AG04449 (cell line): ENCODE measurements at regions of chr19 and their contacts with region 1.

Region 1: DNA sequence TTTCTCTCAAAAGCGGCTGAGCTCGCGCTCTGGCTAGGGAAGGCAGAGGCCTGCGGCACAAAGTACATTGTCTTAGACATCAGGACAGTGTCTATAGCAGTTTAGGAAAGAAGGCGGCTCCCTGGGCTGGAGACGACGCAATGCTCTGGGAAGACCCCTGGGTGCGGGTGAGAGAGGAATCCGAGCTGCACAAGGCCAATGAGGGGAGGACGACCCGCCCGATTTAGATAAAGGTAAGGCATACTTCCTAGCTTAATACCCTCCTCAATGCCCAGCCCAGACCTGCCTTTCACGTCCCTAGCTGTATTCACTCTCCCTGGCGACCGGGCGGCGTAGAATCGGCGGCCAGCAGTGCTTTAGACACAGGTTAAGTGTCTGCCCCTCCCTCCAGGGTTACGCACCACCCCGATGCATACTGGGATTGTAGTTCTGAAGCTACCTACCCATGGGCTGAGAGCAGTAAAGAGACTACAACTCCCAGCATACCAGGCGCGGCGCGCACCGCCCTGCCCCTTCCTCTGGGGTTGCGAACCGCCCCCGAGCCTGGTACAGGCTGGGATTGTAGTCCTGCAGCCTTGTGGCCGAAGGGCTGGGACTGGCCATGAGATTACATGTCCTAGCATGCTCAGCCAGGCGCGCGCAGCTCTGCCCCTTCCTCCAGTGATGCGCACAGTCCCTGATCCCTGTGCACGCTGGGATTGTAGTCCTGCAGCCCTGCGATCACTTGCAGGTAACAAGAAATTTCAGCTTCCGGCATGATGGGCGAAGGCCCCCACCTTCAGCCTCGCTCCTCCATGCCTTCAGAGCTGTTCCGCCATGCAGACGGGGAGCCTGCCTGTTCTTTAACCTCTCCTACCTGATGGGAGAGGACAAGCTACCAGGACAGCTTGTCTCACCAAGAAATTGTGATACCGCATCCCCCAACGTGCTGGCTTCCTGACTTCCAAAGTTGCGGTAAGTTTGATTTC is 43.4 kb upstream of the ZNF14 start:
- DNase-seq: peak; percentile 91
- H3K4me3 ChIP-seq: peak overlapping the region; percentile 95
- CTCF ChIP-seq: peak; percentile 3

Region 2: GRCh38 chr19:19821366-19821951 is 45.1 kb after region 1 on chr19 and contains the start of gene ZNF506:
- CTCF ChIA-PET with region 1: no interaction called
- POLR2A ChIA-PET with region 1: interaction called, 11 read pairs
- DNase-seq: peak; percentile 67
- H3K4me3 ChIP-seq: peak within 1 kb of the TSS; percentile 86
- CTCF ChIP-seq: no peak

Region 3: DNA sequence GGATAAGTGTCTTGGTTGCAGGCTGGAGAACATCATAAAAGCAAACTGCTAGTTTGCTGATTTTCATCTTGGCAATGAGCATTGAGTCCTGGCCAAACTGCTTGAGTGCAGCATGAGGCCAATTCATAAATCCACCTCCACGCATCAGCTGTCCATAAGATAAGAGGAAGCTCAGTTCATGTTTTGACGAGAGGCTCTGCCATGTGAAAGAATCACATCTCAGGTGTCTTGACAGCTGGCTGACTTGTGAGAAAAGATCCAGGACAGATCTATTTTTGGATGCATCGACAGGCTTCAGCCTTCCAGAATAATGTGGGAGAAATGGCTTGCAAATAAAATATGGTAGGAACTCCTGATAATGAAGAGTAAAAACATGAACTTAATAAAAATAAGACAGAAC is 268.3 kb after region 1 on chr19:
- CTCF ChIA-PET with region 1: no interaction called
- POLR2A ChIA-PET with region 1: no interaction called
- DNase-seq: no peak
- H3K4me3 ChIP-seq: no peak overlapping the region
- CTCF ChIP-seq: no peak